ENCODE measurements at regions of chr2 and their contacts with region 1.

Region 1: GRCh38 chr2:47906157-47907038 is at the start of gene FBXO11:
- DNase-seq: peak; percentile 94 to 98
- ATAC-seq: peak; percentile 94 to 98 (median 96)
- H3K4me3 ChIP-seq: peak within 1 kb of the TSS; percentile 76 to 95 (median 90)
- H3K27ac ChIP-seq: peak within 1 kb of the TSS; percentile 93 to 100 (median 99)
- H3K4me1 ChIP-seq: peaks cover 0 to 35% (median 28%) of the 10 kb centered on the region in 9 donors
- H3K27me3 ChIP-seq: no peaks in the 10 kb centered on the region
- CTCF ChIP-seq: peak; percentile 20 to 79 (median 61)
- total RNA-seq, gene FBXO11: 33.3 to 48.2 (median 37.6) TPM

Region 2: GRCh38 chr2:47782671-47783485 is 123.5 kb before region 1 on chr2 and contains the start of gene MSH6:
- intact Hi-C with region 1: loop called in 4 of 10 experiments (anchors 5 to 10 kb)
- DNase-seq: peak; percentile 86 to 90
- ATAC-seq: peak; percentile 95 to 98 (median 98)
- H3K4me3 ChIP-seq: peak within 1 kb of the TSS; percentile 74 to 99 (median 88)
- H3K27ac ChIP-seq: peak within 1 kb of the TSS; percentile 64 to 95 (median 90)
- H3K4me1 ChIP-seq: peaks cover 6 to 37% (median 16%) of the 10 kb centered on the region in 9 donors
- H3K27me3 ChIP-seq: no peaks in the 10 kb centered on the region
- CTCF ChIP-seq: no peak
- total RNA-seq, gene MSH6: 19.0 to 25.2 (median 21.5) TPM

Region 3: DNA sequence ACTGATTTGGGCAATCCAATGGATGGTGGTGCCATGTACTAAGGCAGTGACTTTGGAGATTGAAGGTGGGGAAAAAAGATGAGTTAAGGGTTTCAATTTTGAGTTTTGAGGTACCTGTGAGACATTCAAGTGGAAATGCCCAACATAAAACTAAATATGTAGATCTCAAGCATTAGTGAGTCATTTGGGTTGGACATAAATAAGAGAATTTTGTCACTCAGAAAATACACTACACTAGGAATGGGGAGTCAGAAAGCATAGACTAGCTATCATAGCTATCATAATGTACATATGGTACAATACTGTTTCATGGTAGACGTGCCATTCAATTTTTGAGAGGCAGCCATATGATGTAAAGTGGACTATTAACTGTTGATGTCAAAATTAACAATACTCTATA is 56.2 kb before region 1 on chr2:
- intact Hi-C with region 1: loop called in 3 of 10 experiments (anchors 5 to 10 kb)
- DNase-seq: no peak
- ATAC-seq: no peak
- H3K4me3 ChIP-seq: no peak overlapping the region
- H3K27ac ChIP-seq: no peak overlapping the region
- H3K4me1 ChIP-seq: peaks cover 0 to 60% (median 18%) of the 10 kb centered on the region in 9 donors
- H3K27me3 ChIP-seq: no peaks in the 10 kb centered on the region
- CTCF ChIP-seq: no peak

Region 4: GRCh38 chr2:48107326-48107925 is 201.0 kb after region 1 on chr2:
- intact Hi-C with region 1: loop called in 9 of 10 experiments (anchors 1 to 10 kb)
- DNase-seq: no peak
- ATAC-seq: no peak
- H3K4me3 ChIP-seq: peak overlapping the region in 3 of 10 donors; percentile 18 to 26 (median 19)
- H3K27ac ChIP-seq: peak overlapping the region in 9 of 10 donors; percentile 21 to 67 (median 59)
- H3K4me1 ChIP-seq: peaks cover 0 to 36% (median 20%) of the 10 kb centered on the region in 9 donors
- H3K27me3 ChIP-seq: no peaks in the 10 kb centered on the region
- CTCF ChIP-seq: no peak

Region 5: DNA sequence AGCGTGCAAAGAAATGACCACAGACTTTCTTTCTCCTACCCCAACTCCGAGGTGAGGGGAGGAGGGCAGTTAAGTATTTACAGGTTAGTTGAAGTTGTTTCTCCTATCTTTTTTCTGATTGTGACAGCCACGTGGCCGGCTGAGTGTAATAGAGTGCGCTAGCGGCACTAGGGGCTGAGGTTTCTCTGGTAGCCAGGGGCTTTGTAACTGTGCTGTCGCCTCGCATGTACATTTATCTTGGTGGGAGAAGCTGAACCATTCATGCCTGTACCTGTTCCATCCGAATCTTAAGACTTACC is 409.4 kb after region 1 on chr2:
- intact Hi-C with region 1: no loop called
- DNase-seq: no peak
- ATAC-seq: no peak
- H3K4me3 ChIP-seq: peak overlapping the region; percentile 81 to 98 (median 92)
- H3K27ac ChIP-seq: peak overlapping the region; percentile 77 to 99 (median 98)
- H3K4me1 ChIP-seq: peaks cover 0 to 70% (median 17%) of the 10 kb centered on the region in 9 donors
- H3K27me3 ChIP-seq: no peaks in the 10 kb centered on the region
- CTCF ChIP-seq: no peak

Region 6: DNA sequence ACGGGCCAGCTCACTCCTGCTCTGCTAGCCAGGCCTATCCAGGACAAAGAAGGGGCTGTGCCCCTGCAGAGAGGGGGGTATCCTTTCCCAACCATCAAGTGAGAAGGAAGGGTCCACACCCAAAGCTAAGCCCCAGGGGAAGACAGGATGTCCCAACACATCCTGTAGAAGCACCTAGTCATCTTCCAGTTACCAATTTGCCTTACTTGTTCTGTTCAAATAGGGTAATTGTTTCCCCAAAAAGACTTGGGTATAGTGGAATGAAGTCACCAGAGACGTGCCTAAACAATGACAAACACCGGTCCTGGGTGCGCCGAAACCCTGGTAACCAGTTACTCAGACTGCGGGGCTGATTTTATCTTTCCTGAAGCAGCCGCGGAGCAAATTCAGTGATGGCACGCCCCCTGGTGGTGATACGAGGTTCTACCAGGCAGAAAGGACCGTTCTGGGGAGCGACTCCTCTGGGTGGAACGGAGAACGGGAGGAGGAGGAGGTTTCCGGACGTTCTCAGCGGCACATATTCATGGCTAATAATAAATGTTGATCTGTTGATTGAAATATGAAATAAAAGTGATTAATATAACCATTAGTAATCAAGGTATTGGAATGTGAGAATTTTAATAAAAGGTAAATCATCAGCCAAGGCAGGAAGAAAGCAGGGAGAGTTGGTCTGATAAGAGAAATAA is 514.3 kb after region 1 on chr2:
- intact Hi-C with region 1: loop called in 1 of 10 experiments (anchors 10 kb)
- DNase-seq: peak; percentile 88 to 91
- ATAC-seq: peak; percentile 81 to 98 (median 92)
- H3K4me3 ChIP-seq: peak overlapping the region in 6 of 10 donors; percentile 8 to 32 (median 24)
- H3K27ac ChIP-seq: peak overlapping the region in 9 of 10 donors; percentile 16 to 76 (median 44)
- H3K4me1 ChIP-seq: peaks cover 6 to 28% (median 20%) of the 10 kb centered on the region in 9 donors
- H3K27me3 ChIP-seq: no peaks in the 10 kb centered on the region
- CTCF ChIP-seq: peak; percentile 94 to 99 (median 99)

Measured in heart right ventricle (tissue), 16 donors.